PC-3 (cell line): ENCODE measurements at regions of chr1 and their contacts with region 1.

Region 1: DNA sequence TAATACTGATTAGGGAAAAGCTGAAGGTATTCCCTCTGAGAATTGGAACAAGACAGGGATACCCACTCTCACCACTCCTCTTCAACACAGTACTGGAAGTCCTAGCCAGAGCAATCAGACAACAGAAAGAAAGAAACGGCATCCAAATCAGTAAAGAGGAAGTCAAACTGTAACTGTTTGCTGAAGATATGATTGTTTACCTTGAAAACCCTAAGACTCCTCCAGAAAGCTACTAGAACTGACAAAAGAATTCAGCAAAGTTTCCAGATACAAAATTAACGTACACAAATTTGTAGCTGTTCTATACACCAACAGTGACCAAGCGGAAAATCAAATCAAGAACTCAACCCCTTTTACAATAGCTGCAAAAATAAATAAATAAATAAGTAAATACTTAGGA is 78.6 kb downstream of the EXTL2 start:
- DNase-seq: no peak
- ATAC-seq: no peak
- H3K4me3 ChIP-seq: no peak overlapping the region
- H3K27ac ChIP-seq: no peak overlapping the region
- H3K4me1 ChIP-seq: no peaks in the 10 kb centered on the region
- H3K27me3 ChIP-seq: no peaks in the 10 kb centered on the region
- CTCF ChIP-seq: no peak

Region 2: DNA sequence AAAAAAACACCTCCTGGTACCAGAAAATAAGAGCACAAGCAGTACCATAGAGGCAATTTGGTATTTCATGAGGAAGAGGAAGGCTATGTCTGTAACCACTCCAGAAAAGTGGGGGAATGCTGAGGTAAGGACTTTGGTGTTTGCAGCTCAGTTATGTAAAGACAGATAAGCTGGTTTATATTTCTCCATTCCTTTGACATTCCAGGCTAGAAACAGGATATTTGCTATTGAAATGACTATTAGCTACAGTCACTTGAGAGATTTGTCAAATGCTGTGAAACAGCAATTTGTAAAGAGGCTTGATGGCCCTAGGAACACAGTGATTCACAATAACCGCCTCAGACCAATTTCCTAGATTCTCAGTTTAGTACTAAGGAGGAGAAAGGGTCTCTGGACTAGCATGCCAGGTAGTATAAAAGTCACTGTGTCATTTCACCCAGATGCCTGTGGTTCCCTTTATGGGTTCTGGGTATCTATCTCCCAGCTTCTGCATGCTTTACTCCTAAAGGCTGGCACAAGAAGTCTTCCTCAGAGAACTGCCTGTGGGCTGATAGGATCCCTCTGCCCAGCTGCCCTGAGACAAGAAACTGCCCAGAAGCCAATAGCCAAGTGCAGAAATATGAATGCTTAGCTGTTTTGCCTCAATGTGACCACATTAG is 16.0 kb before region 1 on chr1:
- CTCF ChIA-PET with region 1: interaction called, 5 read pairs
- POLR2A ChIA-PET with region 1: no interaction called
- intact Hi-C with region 1: loop called (anchors 1 kb)
- DNase-seq: peak; percentile 46
- ATAC-seq: no peak
- H3K4me3 ChIP-seq: no peak overlapping the region
- H3K27ac ChIP-seq: no peak overlapping the region
- H3K4me1 ChIP-seq: peaks cover 17% of the 10 kb centered on the region
- H3K27me3 ChIP-seq: no peaks in the 10 kb centered on the region
- CTCF ChIP-seq: no peak